Activated naive CD4-positive, alpha-beta T cell treated with anti-CD3 and anti-CD28 coated beads for 36 hours (primary cell): ENCODE measurements at regions of chr20 and their contacts with region 1.

Region 1: DNA sequence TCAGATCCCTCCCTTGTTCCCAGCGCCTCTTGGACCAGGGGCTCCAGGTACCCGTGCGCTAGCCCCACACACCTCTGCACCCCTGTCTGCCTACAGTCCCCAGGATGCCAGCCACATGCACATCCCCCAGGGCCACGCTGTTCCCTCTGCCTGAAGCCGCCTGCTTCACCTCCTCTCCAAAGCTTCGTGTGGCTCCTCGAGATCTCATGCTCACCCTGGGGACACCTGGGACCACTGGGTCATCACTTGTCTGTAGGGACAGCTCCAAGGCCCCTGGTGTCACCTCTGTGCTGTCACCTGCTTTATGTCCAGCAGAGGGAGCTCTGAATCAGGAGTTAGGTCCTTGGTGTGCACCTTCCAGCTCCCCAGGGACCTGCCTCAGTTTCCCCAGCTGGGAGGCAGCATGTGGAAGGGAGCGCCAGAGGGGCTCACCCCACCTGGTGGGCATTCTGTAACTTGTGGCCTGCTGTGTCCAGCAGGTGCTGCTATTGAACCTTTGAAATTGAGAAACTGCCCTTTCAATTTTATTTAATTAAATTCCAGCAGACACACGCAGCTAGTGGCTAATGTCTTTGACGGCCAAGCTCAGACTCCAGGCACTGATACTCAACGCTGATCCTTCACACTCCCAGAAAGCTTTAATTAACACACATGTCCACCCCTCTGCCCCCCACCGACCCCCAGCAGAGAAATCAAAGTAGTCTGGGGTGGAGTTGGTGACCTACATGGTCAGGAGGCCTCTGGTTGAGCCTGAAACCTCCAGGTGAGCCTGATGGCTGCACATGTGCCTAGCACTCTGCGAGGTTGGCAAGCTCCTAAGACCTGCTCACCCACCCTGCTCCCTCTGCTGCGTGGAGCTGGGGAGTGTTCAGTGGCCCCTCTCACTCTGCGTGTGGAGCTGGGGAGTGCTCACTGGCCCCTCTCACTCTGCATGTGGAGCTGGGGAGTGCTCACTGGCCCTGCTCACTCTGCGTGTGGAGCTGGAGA is 7.6 kb upstream of the YTHDF1 start:
- DNase-seq: peak; percentile 63
- H3K4me3 Mint-ChIP-seq: no peak overlapping the region
- H3K27ac Mint-ChIP-seq: no peak overlapping the region
- H3K4me1 Mint-ChIP-seq: no peaks in the 10 kb centered on the region
- H3K27me3 Mint-ChIP-seq: no peaks in the 10 kb centered on the region

Region 2: DNA sequence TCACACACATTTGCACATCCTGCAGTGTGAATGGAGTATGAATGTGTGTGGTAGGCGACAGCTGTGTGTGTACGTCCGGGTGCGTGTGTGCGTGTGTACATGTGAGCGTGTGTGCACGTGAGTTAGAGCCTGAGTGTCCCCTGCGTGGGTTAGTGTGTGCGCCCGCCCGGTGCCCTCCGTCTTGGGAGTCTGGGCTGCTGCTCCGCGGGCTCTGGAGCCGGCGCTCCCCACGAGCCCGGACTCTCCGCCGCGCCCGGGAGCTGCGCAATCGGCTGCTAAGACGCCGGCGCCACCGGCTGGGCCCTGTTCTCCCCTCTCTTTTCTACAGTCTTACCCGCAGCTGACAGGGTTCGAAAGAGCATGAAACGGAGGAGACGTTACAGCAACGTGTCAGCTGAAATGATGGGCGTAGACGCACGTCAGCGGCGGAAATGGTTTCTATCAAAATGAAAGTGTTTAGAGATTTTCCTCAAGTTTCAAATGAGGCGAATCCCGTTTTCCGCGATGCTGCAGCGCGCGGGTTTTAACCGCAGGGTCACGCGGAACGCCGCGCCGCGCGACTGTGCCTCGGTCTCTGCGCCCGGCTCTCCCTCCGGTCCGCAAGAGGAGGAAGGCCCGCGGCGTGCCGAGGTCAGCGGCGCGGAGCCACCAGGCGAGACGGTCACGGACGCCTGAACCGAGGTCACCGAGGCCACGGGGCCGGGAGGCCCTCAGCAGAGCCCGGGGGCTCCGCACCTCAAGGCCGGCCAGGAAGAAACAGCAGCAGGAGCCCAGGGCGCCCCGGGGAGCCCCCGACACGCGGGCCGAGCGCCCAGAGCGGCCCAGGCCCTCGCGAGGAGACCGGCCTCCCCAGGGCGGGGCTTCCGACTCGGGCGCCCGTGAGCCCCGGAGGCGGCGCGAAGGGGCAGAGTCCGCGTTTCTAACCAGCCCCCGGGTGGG is 121.5 kb before region 1 on chr20:
- CTCF ChIA-PET with region 1: no interaction called
- intact Hi-C with region 1: no loop called
- DNase-seq: peak; percentile 84
- H3K4me3 Mint-ChIP-seq: peak overlapping the region; percentile 79
- H3K27ac Mint-ChIP-seq: peak overlapping the region; percentile 85
- H3K4me1 Mint-ChIP-seq: peaks cover 5% of the 10 kb centered on the region
- H3K27me3 Mint-ChIP-seq: no peaks in the 10 kb centered on the region

Region 3: GRCh38 chr20:63116412-63117099 is 107.0 kb before region 1 on chr20:
- CTCF ChIA-PET with region 1: no interaction called
- intact Hi-C with region 1: no loop called
- DNase-seq: no peak
- H3K4me3 Mint-ChIP-seq: no peak overlapping the region
- H3K27ac Mint-ChIP-seq: no peak overlapping the region
- H3K4me1 Mint-ChIP-seq: no peaks in the 10 kb centered on the region
- H3K27me3 Mint-ChIP-seq: peaks cover 45% of the 10 kb centered on the region

Region 4: GRCh38 chr20:63178889-63179686 is 44.4 kb before region 1 on chr20:
- CTCF ChIA-PET with region 1: interaction called, 10 read pairs
- intact Hi-C with region 1: no loop called
- DNase-seq: peak; percentile 69
- H3K4me3 Mint-ChIP-seq: no peak overlapping the region
- H3K27ac Mint-ChIP-seq: no peak overlapping the region
- H3K4me1 Mint-ChIP-seq: peaks cover 14% of the 10 kb centered on the region
- H3K27me3 Mint-ChIP-seq: peaks cover 29% of the 10 kb centered on the region

Region 5: GRCh38 chr20:63234739-63235398 is 11.4 kb after region 1 on chr20:
- CTCF ChIA-PET with region 1: interaction called, 42 read pairs
- intact Hi-C with region 1: no loop called
- DNase-seq: peak; percentile 51
- H3K4me3 Mint-ChIP-seq: no peak overlapping the region
- H3K27ac Mint-ChIP-seq: no peak overlapping the region
- H3K4me1 Mint-ChIP-seq: peaks cover 4% of the 10 kb centered on the region
- H3K27me3 Mint-ChIP-seq: peaks cover 22% of the 10 kb centered on the region

Region 6: GRCh38 chr20:63253438-63254236 is 30.1 kb after region 1 on chr20:
- CTCF ChIA-PET with region 1: interaction called, 13 read pairs
- intact Hi-C with region 1: loop called (anchors 1 kb)
- DNase-seq: no peak
- H3K4me3 Mint-ChIP-seq: no peak overlapping the region
- H3K27ac Mint-ChIP-seq: no peak overlapping the region
- H3K4me1 Mint-ChIP-seq: peaks cover 2% of the 10 kb centered on the region
- H3K27me3 Mint-ChIP-seq: peaks cover 41% of the 10 kb centered on the region

Region 7: DNA sequence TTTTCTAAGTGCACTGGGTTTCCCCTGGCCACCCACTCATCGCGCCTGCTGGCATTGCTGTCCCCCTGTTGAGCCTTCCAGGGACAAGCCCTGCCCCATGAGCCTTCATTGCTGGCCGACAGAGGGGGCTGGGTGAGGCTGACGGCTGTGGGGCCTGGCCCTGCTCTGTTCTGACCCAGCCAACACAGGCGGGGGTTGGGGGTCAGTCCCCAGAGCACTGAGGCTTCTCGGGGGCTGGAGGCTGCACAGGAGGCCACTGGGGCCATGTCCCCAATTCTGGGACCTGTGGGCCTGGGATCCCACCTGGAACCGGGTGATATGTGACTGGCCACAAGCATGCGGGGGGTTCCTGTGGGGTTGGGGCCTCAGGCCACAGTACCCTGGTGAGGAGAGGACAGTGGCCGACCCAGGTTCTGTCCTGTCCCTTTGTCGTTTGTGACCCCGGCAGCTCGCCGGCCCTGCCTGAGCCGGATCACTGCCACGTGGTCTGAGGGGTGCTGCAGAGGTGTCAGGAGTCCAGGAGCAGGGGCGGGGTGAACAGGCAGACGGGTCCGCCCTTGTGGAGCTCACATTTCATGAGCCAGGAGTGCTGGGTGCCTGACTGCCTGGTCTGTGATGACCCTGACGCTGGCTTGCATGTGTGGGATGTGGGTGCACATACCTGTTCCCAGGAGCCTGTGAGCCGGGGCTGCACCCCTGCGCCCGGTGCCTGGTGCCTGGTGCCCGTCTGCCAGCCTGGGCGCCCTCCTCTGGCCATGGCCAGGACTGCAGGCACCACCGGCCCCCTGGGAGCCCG is 67.4 kb after region 1 on chr20:
- CTCF ChIA-PET with region 1: interaction called, 21 read pairs
- intact Hi-C with region 1: loop called (anchors 1 kb)
- DNase-seq: peak; percentile 69
- H3K4me3 Mint-ChIP-seq: no peak overlapping the region
- H3K27ac Mint-ChIP-seq: no peak overlapping the region
- H3K4me1 Mint-ChIP-seq: peaks cover 1% of the 10 kb centered on the region
- H3K27me3 Mint-ChIP-seq: peaks cover 4% of the 10 kb centered on the region